ENCODE measurements at regions of chr5 and their contacts with region 1.

Region 1: GRCh38 chr5:102681407-102681983 is 73.6 kb upstream of the PAM start:
- DNase-seq: peak; percentile 36
- H3K4me3 ChIP-seq: no peak overlapping the region
- H3K27ac ChIP-seq: no peak overlapping the region
- H3K27me3 ChIP-seq: no peaks in the 10 kb centered on the region
- CTCF ChIP-seq: peak; percentile 87

Region 2: GRCh38 chr5:102583276-102584124 is 98.0 kb before region 1 on chr5:
- CTCF ChIA-PET with region 1: interaction called, 11 read pairs
- POLR2A ChIA-PET with region 1: no interaction called
- DNase-seq: no peak
- H3K4me3 ChIP-seq: no peak overlapping the region
- H3K27ac ChIP-seq: no peak overlapping the region
- H3K27me3 ChIP-seq: no peaks in the 10 kb centered on the region
- CTCF ChIP-seq: peak; percentile 27; the same call in 1 of the 2 replicates

Region 3: DNA sequence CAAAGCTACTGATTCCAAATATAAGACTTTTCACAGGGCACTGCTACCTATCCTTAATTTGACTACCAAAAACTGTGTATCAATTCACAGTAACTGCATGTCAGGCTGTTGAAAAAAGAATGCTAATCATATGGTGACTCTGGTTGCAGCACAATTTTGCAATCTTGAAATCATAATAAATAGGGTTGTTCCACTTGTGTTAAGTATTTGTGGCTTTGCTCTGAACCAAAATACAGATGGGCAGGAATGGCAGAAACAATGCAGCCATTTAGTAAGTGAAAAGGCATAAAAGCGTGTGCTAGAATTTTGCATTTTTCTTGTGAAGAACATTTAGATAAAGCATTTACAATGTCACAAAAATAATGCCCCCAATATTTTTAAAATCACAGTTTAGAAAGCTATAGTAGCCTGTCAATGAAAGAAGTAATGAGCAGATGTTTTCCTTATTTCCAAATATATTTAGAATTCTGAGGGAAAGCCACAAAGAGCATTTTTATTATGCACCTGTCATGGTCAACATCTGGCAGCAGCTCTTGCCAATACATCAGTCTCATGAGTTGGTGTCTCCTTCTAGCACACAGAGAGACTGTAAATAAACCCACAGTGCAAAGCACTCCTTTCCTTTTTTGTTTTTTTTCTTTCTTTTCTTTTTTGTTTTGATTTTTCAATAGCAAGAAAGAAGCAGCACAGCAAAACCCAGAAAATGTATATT is 18.8 kb after region 1 on chr5:
- CTCF ChIA-PET with region 1: interaction called, 29 read pairs
- POLR2A ChIA-PET with region 1: no interaction called
- DNase-seq: no peak
- H3K4me3 ChIP-seq: no peak overlapping the region
- H3K27ac ChIP-seq: no peak overlapping the region
- H3K27me3 ChIP-seq: no peaks in the 10 kb centered on the region
- CTCF ChIP-seq: no peak

Region 4: GRCh38 chr5:102778478-102778877 is 97.0 kb after region 1 on chr5:
- CTCF ChIA-PET with region 1: interaction called, 20 read pairs
- POLR2A ChIA-PET with region 1: interaction called, 3 read pairs
- DNase-seq: no peak
- H3K4me3 ChIP-seq: no peak overlapping the region
- H3K27ac ChIP-seq: no peak overlapping the region
- H3K27me3 ChIP-seq: no peaks in the 10 kb centered on the region
- CTCF ChIP-seq: no peak

Region 5: DNA sequence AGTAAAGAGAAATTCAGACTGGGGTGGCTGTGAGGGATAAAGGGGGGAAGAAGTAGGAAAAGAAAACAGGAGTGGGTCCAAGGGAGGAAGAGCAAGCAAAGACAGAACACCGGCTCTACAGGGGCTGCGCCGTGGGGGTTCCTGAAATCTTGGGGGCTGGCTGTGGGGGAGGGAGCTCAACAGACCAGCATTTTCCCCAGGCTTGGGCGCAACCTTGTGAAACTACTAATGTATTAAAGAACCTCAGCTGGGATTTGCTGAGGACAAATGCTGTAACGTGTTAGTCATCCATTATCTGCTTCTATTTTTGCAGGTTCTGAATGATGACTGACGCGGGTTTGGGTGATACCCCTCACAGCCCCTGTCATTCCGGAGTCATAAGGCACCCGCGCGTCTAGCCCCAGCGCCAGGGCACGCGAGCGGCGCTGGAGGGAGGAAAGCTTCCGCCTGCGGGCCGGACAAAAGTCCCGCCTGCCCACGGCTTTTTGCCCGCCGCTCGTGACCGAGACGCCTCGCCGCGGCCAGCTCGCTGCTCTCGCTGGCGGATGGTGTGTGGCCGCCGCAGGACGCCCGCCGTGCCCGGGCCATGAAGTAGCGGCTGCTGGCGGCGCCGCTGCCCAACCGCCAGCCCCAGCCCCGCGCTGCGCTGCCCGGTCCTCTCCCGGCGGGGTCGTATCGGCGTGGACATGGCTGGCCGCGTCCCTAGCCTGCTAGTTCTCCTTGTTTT is 184.2 kb after region 1 on chr5:
- CTCF ChIA-PET with region 1: interaction called, 13 read pairs
- POLR2A ChIA-PET with region 1: interaction called, 3 read pairs
- DNase-seq: no peak
- H3K4me3 ChIP-seq: peak overlapping the region; percentile 67
- H3K27ac ChIP-seq: peak overlapping the region; percentile 79
- H3K27me3 ChIP-seq: no peaks in the 10 kb centered on the region
- CTCF ChIP-seq: no peak

Region 6: DNA sequence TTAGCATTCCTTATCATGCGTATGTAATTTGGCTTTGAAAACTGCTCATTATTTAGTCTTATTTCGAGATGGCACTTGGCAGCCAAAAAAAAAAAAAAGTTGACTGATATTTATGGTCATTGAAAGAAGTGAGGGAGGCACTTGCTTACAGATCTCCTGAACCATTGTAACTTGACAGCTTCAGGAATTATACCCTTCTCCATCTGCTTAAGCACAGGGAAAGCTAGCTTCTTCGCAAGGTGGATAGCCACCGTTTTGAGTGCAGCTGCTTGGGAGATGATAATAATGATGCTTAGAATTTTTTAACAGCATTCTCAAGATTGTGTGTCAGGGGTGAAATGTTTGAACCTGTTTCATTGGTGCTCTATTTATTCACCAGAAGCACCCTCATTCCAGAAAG is 322.4 kb after region 1 on chr5:
- CTCF ChIA-PET with region 1: interaction called, 11 read pairs
- POLR2A ChIA-PET with region 1: no interaction called
- DNase-seq: no peak
- H3K4me3 ChIP-seq: no peak overlapping the region
- H3K27ac ChIP-seq: no peak overlapping the region
- H3K27me3 ChIP-seq: no peaks in the 10 kb centered on the region
- CTCF ChIP-seq: no peak

Region 7: GRCh38 chr5:103139264-103139865 is 457.9 kb after region 1 on chr5:
- CTCF ChIA-PET with region 1: interaction called, 28 read pairs
- POLR2A ChIA-PET with region 1: no interaction called
- DNase-seq: peak; percentile 38
- H3K4me3 ChIP-seq: no peak overlapping the region
- H3K27ac ChIP-seq: no peak overlapping the region
- H3K27me3 ChIP-seq: no peaks in the 10 kb centered on the region
- CTCF ChIP-seq: peak; percentile 94